Esophagus muscularis mucosa (tissue), 4 donors: ENCODE measurements at regions of chr19 and their contacts with region 1.

Region 1: DNA sequence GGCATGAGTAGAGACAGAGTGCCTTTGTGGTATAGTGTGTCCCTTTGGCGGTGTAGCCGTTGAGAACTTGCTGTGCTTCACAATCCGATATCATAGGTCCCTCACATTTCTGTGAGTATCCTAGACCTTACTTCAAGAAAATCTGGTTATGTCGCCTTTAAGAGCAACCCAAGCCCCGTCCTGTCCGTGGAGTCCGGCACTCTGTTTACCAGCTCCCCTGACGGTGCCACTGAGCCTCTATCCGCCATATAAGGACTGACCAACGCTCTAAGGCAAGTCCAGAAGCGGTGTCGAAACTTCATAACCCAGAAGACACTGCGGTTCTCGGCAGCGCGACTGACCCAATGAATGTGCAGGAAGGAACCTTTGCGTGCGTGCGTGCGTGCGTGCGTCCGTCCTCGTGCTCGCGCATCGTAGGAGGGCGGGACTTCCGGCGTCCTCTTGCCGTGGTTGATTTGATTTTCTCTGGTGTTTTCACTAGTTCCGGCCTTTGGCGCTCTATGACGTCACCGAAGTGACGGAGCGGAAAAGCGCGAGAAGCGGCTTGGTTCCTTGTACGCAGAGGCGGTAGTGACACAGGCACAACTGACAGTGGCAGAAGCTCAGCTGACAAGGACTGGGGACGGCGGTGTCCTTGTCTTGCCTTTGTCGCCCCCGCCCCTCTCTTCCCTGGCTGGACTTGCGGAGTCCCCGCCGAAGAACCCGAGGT is at the starts of genes TRAPPC2B and ZNF547:
- DNase-seq: peak; percentile 100
- H3K4me3 ChIP-seq: peak within 1 kb of the TSS; percentile 83 to 94 (median 86)
- H3K27ac ChIP-seq: peak within 1 kb of the TSS; percentile 93 to 98 (median 97)
- H3K4me1 ChIP-seq: peaks cover 14 to 24% (median 18%) of the 10 kb centered on the region in 4 donors
- H3K27me3 ChIP-seq: no peaks in the 10 kb centered on the region
- CTCF ChIP-seq: no peak
- EP300 ChIP-seq: peak; percentile 72
- POLR2A ChIP-seq: no peak
- total RNA-seq, gene TRAPPC2B: 12.9 to 29.5 (median 20.2) TPM
- total RNA-seq, gene ZNF547: 1.4 to 3.3 (median 2.8) TPM

Region 2: DNA sequence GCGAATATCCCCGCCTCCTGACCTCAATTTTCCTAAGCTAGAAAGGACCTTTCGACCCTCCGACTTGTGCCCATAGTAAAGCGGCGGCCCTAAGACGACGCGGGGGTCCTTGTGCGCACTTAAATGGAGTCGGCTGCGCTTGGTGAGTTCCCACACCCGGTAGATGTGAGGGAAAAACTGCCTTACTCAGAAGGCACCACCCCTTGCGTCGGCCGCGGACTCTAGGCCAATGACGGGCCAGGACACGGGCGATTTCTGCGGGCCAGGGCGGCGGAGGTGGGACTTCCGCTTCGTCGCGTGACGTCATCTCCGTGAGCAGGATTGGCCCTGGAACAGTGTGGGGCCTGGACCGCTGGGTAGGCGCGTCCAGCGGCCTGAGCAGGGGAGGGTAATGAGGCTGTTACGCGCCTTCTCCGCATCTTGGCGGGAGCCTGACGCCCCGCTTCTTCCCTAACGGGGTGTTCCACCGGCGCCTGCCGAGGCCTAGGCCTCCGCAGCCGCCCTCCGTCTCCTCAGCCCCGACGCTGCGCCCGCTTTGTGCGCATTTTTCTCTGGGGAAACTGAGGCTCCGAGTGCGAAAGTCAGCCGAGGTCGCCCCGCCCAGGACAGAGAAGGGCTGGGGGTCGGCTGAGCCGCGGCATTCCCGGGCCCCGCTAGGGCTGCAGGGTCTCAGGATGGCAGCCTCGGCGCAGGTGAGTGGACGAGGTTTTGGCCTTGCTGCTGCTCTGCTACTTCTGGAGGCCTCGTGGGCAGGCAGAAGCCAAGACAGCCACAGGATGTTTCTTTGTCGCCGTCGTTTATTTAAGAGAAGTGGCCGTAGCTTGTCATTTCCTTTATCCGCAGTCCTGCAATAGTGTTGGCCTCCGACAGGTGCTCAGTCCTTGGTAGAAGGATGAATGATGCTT is 42.7 kb before region 1 on chr19 and contains the start of gene ZNF543:
- intact Hi-C with region 1: no loop called
- DNase-seq: peak; percentile 99
- H3K4me3 ChIP-seq: peak within 1 kb of the TSS; percentile 67 to 96 (median 82)
- H3K27ac ChIP-seq: peak within 1 kb of the TSS; percentile 86 to 94 (median 92)
- H3K4me1 ChIP-seq: peaks cover 16 to 33% (median 22%) of the 10 kb centered on the region in 4 donors
- H3K27me3 ChIP-seq: no peaks in the 10 kb centered on the region
- CTCF ChIP-seq: peak in 1 of 3 experiments; percentile 20
- EP300 ChIP-seq: no peak
- POLR2A ChIP-seq: peak; percentile 31
- total RNA-seq, gene ZNF543: 6.6 to 9.1 (median 8.3) TPM

Region 3: GRCh38 chr19:57389730-57390598 is 26.8 kb after region 1 on chr19 and contains the start of gene ZNF548:
- intact Hi-C with region 1: loop called (anchors 2 kb)
- DNase-seq: peak; percentile 99
- H3K4me3 ChIP-seq: peak within 1 kb of the TSS; percentile 69 to 83 (median 76)
- H3K27ac ChIP-seq: peak within 1 kb of the TSS; percentile 87 to 96 (median 91)
- H3K4me1 ChIP-seq: peaks cover 14 to 32% (median 29%) of the 10 kb centered on the region in 4 donors
- H3K27me3 ChIP-seq: no peaks in the 10 kb centered on the region
- CTCF ChIP-seq: peak in 1 of 3 experiments; percentile 23
- EP300 ChIP-seq: no peak
- POLR2A ChIP-seq: peak; percentile 40
- total RNA-seq, gene ZNF548: 20.2 to 26.3 (median 23.6) TPM